B cell (primary cell): ENCODE measurements at regions of chr19 and their contacts with region 1.

Region 1: DNA sequence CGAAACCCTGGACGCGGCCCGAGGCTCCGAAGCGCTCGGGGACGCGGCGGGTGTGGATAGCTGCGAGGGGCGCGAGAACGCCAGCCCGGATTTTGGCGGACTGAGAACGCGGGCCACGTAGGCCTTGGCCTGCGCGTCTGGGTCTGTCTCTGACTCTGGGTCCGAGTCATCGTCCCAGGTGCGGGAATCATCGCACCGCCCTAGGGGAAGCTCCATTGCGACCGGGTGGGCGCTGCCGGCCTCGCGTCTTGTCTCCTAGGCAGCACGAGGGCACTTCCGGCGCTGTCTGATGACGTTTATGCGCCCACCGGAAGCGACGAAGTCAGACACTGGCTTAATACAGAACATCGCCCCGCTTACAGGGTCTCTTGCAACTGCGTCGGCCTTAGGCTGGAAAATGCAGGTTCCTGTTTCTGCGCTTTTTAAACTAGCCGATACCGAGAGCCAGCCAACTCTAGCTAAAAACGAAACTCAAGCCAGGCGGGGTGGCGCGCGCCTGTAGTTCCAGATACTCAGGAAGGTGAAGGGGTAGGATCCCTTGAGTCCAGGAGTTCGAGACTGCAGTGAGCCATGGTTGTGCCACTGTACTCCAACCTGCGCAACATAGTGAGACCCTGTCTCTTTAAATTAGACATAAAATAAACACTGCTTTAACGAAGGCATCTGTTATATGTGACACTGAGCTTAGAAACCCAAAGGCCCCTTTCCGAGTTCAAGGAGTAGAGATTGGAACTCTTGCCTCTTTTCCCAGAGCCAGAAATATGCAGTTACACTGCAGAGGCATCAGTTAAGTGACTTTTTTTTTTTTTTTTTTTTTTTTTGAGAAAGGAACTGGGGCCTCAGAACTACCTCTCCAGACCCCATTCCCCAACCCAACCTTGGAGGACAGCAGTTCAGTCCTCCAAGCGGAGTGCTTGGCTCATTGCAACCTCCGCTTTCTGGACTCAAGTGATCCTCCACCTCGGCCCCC is at the start of gene FBXW9:
- DNase-seq: peak; percentile 98
- ATAC-seq: peak; percentile 87
- H3K4me3 ChIP-seq: peak within 1 kb of the TSS; percentile 64 to 88 (median 82)
- H3K4me3 Mint-ChIP-seq: peak within 1 kb of the TSS; percentile 94
- H3K27ac ChIP-seq: peak within 1 kb of the TSS; percentile 85 to 93
- H3K27ac Mint-ChIP-seq: peak within 1 kb of the TSS; percentile 98
- H3K4me1 ChIP-seq: peaks cover 13 to 17% of the 10 kb centered on the region in 2 donors
- H3K4me1 Mint-ChIP-seq: peaks cover 10% of the 10 kb centered on the region
- H3K27me3 ChIP-seq: no peaks in the 10 kb centered on the region
- H3K27me3 Mint-ChIP-seq: no peaks in the 10 kb centered on the region
- CTCF ChIP-seq: no peak
- total RNA-seq, gene FBXW9: 4.7 and 5.2 TPM in 2 replicates

Region 2: GRCh38 chr19:12681074-12681951 is 15.3 kb before region 1 on chr19 and contains the start of gene DHPS:
- CTCF ChIA-PET with region 1: interaction called, 16 read pairs
- POLR2A ChIA-PET with region 1: interaction called, 12 read pairs
- intact Hi-C with region 1: loop called (anchors 1 kb)
- DNase-seq: peak; percentile 98
- ATAC-seq: peak; percentile 75
- H3K4me3 ChIP-seq: peak within 1 kb of the TSS; percentile 73 to 90 (median 86)
- H3K4me3 Mint-ChIP-seq: peak within 1 kb of the TSS; percentile 93
- H3K27ac ChIP-seq: peak within 1 kb of the TSS; percentile 89 to 95
- H3K27ac Mint-ChIP-seq: peak within 1 kb of the TSS; percentile 94
- H3K4me1 ChIP-seq: peaks cover 9 to 17% of the 10 kb centered on the region in 2 donors
- H3K4me1 Mint-ChIP-seq: peaks cover 24% of the 10 kb centered on the region
- H3K27me3 ChIP-seq: no peaks in the 10 kb centered on the region
- H3K27me3 Mint-ChIP-seq: no peaks in the 10 kb centered on the region
- CTCF ChIP-seq: no peak
- total RNA-seq, gene DHPS: 187 and 200 TPM in 2 replicates